ENCODE measurements at regions of chr12 and their contacts with region 1.

Region 1: GRCh38 chr12:121888478-121889266 is at the start of gene PSMD9:
- DNase-seq: peak; percentile 96 to 99 (median 98)
- ATAC-seq: peak; percentile 97 to 99 (median 99)
- H3K4me3 ChIP-seq: peak within 1 kb of the TSS; percentile 38 to 92 (median 70)
- H3K27ac ChIP-seq: peak within 1 kb of the TSS; percentile 80 to 96 (median 89)
- H3K4me1 ChIP-seq: peaks cover 12 to 23% (median 15%) of the 10 kb centered on the region in 3 donors
- H3K27me3 ChIP-seq: no peaks in the 10 kb centered on the region
- CTCF ChIP-seq: peak in 3 of 4 donors; percentile 9 to 37 (median 19)
- total RNA-seq, gene PSMD9: 22.4 to 32.8 (median 25.6) TPM

Region 2: DNA sequence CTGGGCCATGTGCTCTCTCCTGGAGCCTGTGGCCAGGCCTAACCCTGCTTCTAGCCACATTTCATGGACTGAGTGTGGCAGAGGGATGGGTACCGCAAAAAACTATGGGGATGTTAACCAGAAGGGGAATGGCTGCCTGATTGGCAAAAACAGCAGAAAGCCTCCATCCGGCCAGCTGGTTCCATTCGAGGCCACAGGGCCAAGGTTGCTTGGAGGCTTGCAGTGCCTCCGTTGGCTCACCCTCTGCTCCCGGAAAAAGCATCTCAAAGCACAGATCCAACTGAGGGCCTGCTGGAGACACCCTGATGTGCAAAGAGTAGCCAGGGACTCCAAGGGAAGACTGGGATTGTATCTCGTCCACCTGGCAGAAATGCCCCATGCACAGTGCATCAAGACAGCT is 159.7 kb before region 1 on chr12:
- intact Hi-C with region 1: no loop called
- DNase-seq: no peak
- ATAC-seq: no peak
- H3K4me3 ChIP-seq: no peak overlapping the region
- H3K27ac ChIP-seq: no peak overlapping the region
- H3K4me1 ChIP-seq: no peaks in the 10 kb centered on the region
- H3K27me3 ChIP-seq: no peaks in the 10 kb centered on the region
- CTCF ChIP-seq: no peak

Region 3: DNA sequence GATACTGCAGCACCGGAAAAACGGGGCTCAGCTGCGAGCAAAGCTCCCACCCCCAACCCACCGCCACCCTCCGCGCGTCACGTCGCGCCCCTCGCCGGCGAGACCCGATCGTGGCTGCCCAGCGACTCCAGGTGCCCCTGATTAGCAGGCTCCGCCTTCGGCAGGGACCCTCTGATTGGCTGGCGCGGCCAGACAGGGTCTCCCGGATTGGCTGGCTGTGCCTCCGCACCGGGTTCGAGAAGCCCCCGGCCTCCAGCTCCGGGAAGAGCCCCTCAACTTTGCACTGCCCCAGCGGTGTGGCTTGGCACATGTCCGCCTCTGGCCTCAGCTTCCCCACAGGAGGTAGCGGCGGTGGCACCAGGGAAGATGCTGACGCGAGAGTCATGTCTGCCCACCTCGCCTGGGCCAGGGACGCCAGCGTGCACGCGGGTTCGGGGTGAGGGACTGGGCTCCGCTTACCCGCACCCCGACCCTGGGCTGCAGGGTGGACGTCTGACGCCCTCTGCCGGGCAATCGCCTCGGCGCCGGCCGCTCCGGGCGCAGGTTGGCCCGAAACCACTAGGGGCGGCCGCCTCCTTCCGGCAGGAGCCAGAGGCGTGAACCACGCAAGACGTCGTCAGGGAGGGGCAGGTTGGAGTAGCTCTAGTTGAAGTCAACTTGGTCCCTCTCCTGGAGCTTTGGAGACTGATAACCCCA is 94.7 kb before region 1 on chr12:
- intact Hi-C with region 1: loop called in 1 of 3 experiments (anchors 10 kb)
- DNase-seq: peak; percentile 86 to 96 (median 94)
- ATAC-seq: peak; percentile 71 to 81 (median 72)
- H3K4me3 ChIP-seq: peak overlapping the region; percentile 27 to 68 (median 50)
- H3K27ac ChIP-seq: peak overlapping the region; percentile 54 to 100 (median 88)
- H3K4me1 ChIP-seq: peaks cover 34 to 43% (median 41%) of the 10 kb centered on the region in 3 donors
- H3K27me3 ChIP-seq: no peaks in the 10 kb centered on the region
- CTCF ChIP-seq: peak; percentile 99 to 100 (median 100)